Right ventricle myocardium inferior (tissue), 1 donor: ENCODE measurements at regions of chr5 and their contacts with region 1.

Region 1: GRCh38 chr5:172764849-172765765 is 5.9 kb downstream of the DUSP1 start:
- DNase-seq: peak; percentile 97
- ATAC-seq: peak; percentile 73

Region 2: DNA sequence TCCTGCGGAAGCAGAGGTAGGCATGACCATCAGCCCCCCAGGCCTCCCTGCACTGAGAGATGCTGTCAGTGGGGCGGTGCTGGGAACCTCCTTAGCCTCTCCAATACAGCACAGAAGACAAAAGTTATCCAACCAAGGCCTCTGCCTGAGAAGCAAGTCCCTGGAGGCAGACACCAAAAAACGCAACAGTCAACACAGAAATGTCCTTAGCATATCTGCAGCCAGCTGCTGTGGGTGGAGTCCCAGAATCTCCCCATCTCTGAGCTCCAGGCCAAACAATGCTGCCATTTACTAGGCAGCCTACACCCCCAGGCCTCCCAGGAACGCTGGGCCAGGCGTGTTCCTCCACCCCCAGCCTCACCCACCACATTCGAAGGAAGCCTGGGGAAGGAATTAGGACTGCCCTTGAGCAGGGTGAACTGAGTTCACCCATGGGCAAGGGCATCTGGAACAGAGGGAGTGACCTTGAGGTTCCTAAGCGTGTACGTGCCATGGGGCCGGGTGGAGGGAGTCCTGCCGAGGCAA is 620.8 kb before region 1 on chr5:
- intact Hi-C with region 1: no loop called
- DNase-seq: no peak
- ATAC-seq: peak; percentile 88

Region 3: GRCh38 chr5:172740428-172741201 is 24.5 kb before region 1 on chr5:
- intact Hi-C with region 1: loop called (anchors 2 kb)
- DNase-seq: peak; percentile 85
- ATAC-seq: peak; percentile 92

Region 4: DNA sequence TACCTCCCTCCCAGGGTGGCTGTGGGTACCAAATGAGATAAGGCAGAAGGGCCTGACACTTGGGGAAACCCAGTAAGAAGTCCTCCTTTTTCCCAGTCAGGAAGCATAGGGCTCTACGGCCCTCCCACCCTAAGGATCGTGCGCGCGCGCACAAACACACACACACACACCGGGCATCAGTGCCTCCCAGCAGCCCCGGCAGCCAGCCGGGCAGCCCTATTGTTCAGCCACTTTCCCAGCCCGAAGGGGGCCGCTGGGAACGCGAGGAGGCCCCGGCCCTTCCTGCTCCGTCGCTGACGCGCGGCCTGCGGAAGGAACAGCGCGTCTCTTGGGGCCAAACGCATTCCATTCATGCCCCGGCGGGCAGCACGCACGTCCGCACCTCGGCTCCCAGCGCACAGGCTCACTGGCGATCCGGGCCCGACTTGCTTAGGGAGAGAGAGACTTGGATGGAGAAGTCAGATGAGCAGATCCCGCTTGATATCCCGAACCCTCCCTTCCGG is 16.7 kb before region 1 on chr5:
- intact Hi-C with region 1: loop called (anchors 1 kb)
- DNase-seq: peak; percentile 92
- ATAC-seq: peak; percentile 82